Activated CD8-positive, alpha-beta T cell treated with anti-CD3 and anti-CD28 coated beads, Interleukin-2, amount 10 ng/mL, durations not matched to agents 7 days and 5 days (primary cell): ENCODE measurements at regions of chr20 and their contacts with region 1.

Region 1: GRCh38 chr20:5100684-5101347 is 18.9 kb downstream of the PCNA start:
- DNase-seq: peak; percentile 79
- ATAC-seq: peak; percentile 84
- H3K4me3 Mint-ChIP-seq: no peak overlapping the region
- H3K27ac Mint-ChIP-seq: no peak overlapping the region
- H3K4me1 Mint-ChIP-seq: peaks cover 8% of the 10 kb centered on the region
- H3K27me3 Mint-ChIP-seq: no peaks in the 10 kb centered on the region

Region 2: DNA sequence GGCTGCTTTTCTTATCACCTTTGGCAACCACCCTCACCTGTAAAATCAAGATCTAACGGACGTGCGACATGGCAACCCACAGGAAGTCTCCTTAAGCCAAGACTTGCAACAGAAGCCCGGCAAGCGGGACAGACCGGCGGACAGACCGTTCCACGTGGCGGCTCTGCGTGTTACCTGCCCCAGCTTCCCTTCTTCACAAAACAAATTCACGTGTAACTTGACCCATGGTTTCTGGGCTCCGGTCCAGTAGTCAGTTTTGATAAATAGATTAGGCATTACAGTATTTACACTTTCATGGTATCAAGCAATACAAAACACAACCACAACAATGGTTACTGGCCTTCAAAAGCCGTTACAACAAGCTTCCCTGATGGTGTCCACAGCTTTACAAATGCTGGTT is 245.3 kb before region 1 on chr20:
- CTCF ChIA-PET with region 1: no interaction called
- POLR2A ChIA-PET with region 1: no interaction called
- DNase-seq: no peak
- ATAC-seq: no peak
- H3K4me3 Mint-ChIP-seq: no peak overlapping the region
- H3K27ac Mint-ChIP-seq: no peak overlapping the region
- H3K4me1 Mint-ChIP-seq: no peaks in the 10 kb centered on the region
- H3K27me3 Mint-ChIP-seq: no peaks in the 10 kb centered on the region

Region 3: GRCh38 chr20:4956200-4956810 is 144.5 kb before region 1 on chr20:
- CTCF ChIA-PET with region 1: interaction called, 36 read pairs
- POLR2A ChIA-PET with region 1: no interaction called
- DNase-seq: no peak
- ATAC-seq: no peak
- H3K4me3 Mint-ChIP-seq: no peak overlapping the region
- H3K27ac Mint-ChIP-seq: no peak overlapping the region
- H3K4me1 Mint-ChIP-seq: peaks cover 5% of the 10 kb centered on the region
- H3K27me3 Mint-ChIP-seq: no peaks in the 10 kb centered on the region

Region 4: DNA sequence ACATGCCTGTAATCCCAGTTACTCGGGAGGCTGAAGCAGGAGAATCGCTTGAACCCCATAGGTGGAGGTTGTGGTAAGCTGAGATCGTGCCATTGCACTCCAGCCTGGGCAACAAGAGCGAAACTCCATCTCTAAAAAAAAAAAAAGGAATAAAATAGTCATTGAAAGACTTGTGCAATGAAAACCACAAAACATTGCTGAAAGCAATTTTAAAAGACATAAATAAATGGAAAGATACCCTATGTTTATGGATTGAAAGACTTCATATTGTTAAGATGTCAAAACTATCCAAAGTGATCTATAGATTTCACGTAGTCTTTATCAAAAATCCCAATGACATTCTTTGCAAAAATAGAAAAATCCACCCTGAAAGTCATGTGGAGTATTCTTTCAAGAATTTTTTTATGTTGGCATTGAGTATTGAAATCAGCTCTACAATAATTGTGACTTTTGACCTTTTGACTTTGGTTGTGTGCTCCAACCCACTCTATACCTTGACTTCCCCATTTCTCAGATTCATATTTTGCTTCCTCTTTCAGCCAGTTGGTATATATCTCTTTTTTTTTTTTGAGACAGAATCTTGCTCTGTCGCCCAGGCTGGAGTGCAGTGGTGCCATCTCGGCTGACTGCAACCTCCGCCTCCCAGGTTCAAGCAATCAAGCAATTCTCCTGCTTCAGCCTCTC is 54.0 kb before region 1 on chr20:
- CTCF ChIA-PET with region 1: interaction called, 11 read pairs
- POLR2A ChIA-PET with region 1: no interaction called
- DNase-seq: no peak
- ATAC-seq: no peak
- H3K4me3 Mint-ChIP-seq: no peak overlapping the region
- H3K27ac Mint-ChIP-seq: no peak overlapping the region
- H3K4me1 Mint-ChIP-seq: no peaks in the 10 kb centered on the region
- H3K27me3 Mint-ChIP-seq: peaks cover 19% of the 10 kb centered on the region

Region 5: DNA sequence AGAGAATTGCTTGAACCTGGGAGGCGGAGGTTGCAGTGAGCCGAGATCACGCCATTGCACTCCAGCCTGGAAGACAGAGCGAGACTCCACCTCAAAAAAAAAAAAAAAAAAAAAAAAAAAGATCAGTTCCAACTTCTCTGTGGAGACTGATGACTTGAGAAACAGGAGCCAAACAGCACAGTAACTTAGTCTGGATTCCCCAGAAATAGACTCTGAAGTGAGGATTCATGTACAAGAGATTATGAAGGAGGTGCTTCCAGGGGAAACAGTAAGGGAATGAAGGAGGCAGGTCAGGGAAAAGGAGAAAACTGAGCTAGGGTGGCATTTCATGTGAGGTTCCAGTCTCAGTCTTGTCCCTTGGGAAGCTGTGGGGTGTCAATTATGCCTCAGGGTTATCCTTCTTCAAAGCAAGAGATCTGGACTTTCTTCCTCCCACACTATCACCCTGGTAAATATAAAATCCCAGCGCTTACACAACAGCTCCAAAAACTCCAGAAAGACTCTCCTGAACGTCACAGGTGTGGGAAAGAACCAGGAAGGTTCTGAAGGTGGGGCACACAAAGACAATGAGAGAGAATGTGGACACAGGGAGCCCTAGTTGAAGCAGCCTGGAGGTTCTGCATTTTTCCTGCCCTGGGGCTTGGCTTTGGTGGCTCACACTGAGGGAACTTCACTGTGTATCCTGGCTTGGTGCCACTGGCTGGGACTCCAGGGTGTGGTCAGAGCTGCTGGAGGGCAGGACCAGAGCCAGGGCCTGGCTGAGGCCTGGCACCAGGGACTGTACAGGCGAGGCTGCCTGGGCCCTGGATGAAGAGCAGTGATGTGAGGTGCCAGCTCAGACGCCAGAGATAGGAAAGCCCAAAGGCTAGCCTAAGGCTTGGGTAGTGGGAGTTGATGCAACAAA is 27.8 kb before region 1 on chr20:
- CTCF ChIA-PET with region 1: interaction called, 20 read pairs
- POLR2A ChIA-PET with region 1: no interaction called
- DNase-seq: no peak
- ATAC-seq: no peak
- H3K4me3 Mint-ChIP-seq: no peak overlapping the region
- H3K27ac Mint-ChIP-seq: peak overlapping the region; percentile 65
- H3K4me1 Mint-ChIP-seq: peaks cover 34% of the 10 kb centered on the region
- H3K27me3 Mint-ChIP-seq: no peaks in the 10 kb centered on the region

Region 6: GRCh38 chr20:5215672-5216304 is 115.0 kb after region 1 on chr20:
- CTCF ChIA-PET with region 1: no interaction called
- POLR2A ChIA-PET with region 1: no interaction called
- DNase-seq: no peak
- ATAC-seq: no peak
- H3K4me3 Mint-ChIP-seq: no peak overlapping the region
- H3K27ac Mint-ChIP-seq: no peak overlapping the region
- H3K4me1 Mint-ChIP-seq: no peaks in the 10 kb centered on the region
- H3K27me3 Mint-ChIP-seq: no peaks in the 10 kb centered on the region